Panc1 (cell line): ENCODE measurements at regions of chr11 and their contacts with region 1.

Region 1: DNA sequence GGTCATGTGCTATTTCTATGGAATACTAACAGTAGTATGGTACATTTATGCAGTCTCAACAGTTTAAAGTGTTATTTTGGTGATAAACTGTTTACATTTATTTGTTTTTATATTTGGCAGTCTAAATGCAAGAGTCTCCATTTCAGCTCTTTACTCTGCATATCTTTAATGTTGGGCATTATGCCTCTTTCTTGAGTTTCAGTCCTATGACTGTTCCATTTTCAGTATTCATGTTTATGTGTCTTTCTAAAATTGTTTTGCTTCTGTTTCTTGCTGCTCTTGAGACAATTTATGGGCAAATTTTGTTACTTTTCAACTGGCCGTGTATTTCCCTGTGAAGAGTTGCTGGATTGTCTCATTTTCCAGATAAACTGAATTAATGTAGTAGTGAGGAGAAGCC is 6.6 kb upstream of the RAB30 start:
- DNase-seq: no peak
- ATAC-seq: no peak
- H3K4me3 ChIP-seq: no peak overlapping the region
- H3K27ac ChIP-seq: no peak overlapping the region
- H3K4me1 ChIP-seq: peaks cover 7% of the 10 kb centered on the region
- H3K27me3 ChIP-seq: no peaks in the 10 kb centered on the region
- CTCF ChIP-seq: no peak

Region 2: GRCh38 chr11:83140696-83141455 is 62.6 kb after region 1 on chr11:
- CTCF ChIA-PET with region 1: no interaction called
- POLR2A ChIA-PET with region 1: interaction called, 12 read pairs
- in situ Hi-C with region 1: no loop called
- intact Hi-C with region 1: no loop called
- DNase-seq: no peak
- ATAC-seq: no peak
- H3K4me3 ChIP-seq: no peak overlapping the region
- H3K27ac ChIP-seq: no peak overlapping the region
- H3K4me1 ChIP-seq: no peaks in the 10 kb centered on the region
- H3K27me3 ChIP-seq: no peaks in the 10 kb centered on the region
- CTCF ChIP-seq: no peak